ENCODE measurements at regions of chr21 and their contacts with region 1.

Region 1: DNA sequence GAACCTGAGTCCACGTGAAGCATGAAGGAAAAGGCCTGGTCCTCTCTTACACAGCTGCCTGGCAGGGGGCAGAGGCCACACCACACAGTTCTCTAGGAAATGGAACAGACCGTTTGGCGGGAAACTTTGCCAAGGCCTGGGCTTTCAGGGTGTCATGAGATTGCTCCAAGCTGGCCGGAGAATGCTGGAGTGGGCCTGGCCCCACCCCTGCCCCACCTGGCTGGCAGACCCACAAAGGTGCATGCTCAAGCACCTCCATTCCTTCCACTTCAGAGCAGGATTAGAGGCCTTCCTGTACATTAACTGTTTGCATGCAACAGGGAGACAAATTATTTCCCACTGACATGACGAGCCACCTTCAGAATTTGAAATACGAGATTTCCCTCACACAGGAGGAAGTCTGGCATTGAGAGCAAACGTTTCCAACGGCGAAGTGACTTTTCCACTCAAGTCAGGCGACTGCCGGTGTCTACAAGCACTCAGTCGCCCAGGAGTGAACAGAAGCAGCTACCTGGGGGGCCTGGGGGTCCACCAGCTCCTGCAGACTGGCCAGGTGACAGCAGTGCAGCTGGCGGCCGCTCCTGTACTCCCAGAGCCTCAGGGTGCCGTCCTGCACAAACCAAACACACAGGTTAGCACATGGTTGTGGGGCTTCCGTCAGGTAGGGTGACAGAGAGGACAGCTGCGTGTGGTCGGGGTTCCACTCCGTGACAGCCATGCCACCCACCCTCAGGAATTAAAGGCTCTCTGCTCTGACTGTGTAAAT is 24.0 kb downstream of the WDR4 start:
- DNase-seq: no peak
- ATAC-seq: no peak
- H3K4me3 ChIP-seq: no peak overlapping the region
- H3K27ac ChIP-seq: no peak overlapping the region
- H3K4me1 ChIP-seq: no peaks in the 10 kb centered on the region
- H3K27me3 ChIP-seq: no peaks in the 10 kb centered on the region
- CTCF ChIP-seq: no peak

Region 2: GRCh38 chr21:42833439-42833815 is 21.9 kb before region 1 on chr21:
- intact Hi-C with region 1: loop called in 1 of 10 experiments (anchors 1 kb)
- DNase-seq: peak in 1 of 2 donors; percentile 27
- ATAC-seq: peak in 2 of 8 donors; percentile 35 to 37
- H3K4me3 ChIP-seq: no peak overlapping the region
- H3K27ac ChIP-seq: no peak overlapping the region
- H3K4me1 ChIP-seq: peaks cover 0 to 10% (median 0%) of the 10 kb centered on the region in 9 donors
- H3K27me3 ChIP-seq: peaks cover 0 to 50% (median 46%) of the 10 kb centered on the region in 7 donors
- CTCF ChIP-seq: peak in 2 of 9 donors; percentile 27 to 49

Region 3: GRCh38 chr21:42913476-42913875 is 58.1 kb after region 1 on chr21:
- intact Hi-C with region 1: no loop called
- DNase-seq: no peak
- ATAC-seq: peak in 3 of 8 donors; percentile 7 to 32 (median 32)
- H3K4me3 ChIP-seq: no peak overlapping the region
- H3K27ac ChIP-seq: no peak overlapping the region
- H3K4me1 ChIP-seq: no peaks in the 10 kb centered on the region
- H3K27me3 ChIP-seq: no peaks in the 10 kb centered on the region
- CTCF ChIP-seq: no peak